ENCODE measurements at regions of chr7 and their contacts with region 1.

Region 1: DNA sequence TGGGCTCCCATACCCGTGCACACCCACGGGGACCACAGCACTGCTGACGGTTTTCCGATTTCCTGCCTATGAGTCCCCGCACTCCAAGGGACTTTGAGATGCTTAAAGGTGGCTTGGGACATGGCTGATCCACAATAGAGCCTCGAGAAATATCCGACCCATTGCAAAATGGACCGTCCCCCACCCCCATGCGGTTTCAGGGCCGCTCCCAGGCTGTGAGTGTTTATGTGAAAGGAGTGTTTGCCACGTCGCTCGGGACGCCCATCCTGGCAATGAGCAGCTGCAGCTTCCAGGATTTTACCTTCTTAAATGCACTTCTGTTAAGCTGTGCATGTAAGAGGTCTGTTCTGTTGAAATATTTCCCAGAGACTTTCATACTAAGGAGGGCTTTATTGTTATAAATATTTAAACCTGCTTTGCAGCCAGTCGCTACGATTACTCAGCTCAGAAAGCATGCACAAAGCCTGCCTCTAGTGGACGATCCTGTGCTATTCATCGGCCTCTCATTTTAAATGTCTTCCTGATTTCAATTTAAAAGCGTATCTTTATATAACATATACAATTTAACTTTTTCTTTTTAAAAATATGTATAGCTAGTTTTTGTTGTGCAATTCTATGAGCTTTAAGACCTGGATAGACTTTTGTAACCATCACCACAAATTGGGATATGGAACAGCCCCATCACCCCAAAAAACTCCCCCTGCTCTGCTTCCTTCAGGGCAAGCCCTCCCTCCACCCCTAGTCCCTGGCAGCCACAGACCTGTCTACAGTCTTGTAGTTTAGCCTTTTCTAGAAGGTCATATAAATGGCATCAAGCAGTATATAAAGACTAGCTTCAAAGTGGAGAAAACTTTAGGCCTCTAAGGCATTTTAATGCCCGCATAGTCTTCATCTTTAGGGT is 418.3 kb downstream of the PAXIP1 start:
- DNase-seq: peak; percentile 56
- H3K4me3 ChIP-seq: no peak overlapping the region
- H3K27ac ChIP-seq: no peak overlapping the region
- H3K4me1 ChIP-seq: peaks cover 0 to 5% of the 10 kb centered on the region in 2 experiments; a peak in 1 of 4 replicates
- H3K27me3 ChIP-seq: no peaks in the 10 kb centered on the region
- CTCF ChIP-seq: peak; percentile 16
- EP300 ChIP-seq: no peak
- RAD21 ChIP-seq: peak; percentile 55

Region 2: GRCh38 chr7:154474903-154475520 is 109.6 kb before region 1 on chr7:
- CTCF ChIA-PET with region 1: no interaction called
- POLR2A ChIA-PET with region 1: no interaction called
- DNase-seq: no peak
- H3K4me3 ChIP-seq: no peak overlapping the region
- H3K27ac ChIP-seq: no peak overlapping the region
- H3K4me1 ChIP-seq: no peaks in the 10 kb centered on the region
- H3K27me3 ChIP-seq: no peaks in the 10 kb centered on the region
- CTCF ChIP-seq: no peak
- EP300 ChIP-seq: no peak
- RAD21 ChIP-seq: no peak

Region 3: DNA sequence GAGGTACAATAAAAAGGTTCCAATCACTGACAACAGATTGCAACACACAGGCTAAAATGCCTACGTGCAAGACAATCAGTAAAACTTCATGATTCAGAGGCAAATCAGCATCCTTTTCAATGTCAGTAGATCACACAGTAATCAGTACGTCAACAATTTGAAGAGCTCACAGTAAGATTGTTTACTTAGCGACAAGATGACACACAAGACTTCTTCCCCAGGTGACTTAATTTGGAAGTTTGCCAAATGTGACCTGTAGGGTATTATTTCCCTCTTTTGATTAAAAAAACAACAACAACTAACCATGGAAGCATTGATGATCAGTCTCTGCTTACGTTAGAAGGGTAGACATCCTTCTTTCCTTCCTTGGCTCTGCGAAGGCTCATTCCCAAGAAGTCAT is 35.3 kb before region 1 on chr7:
- CTCF ChIA-PET with region 1: interaction called, 17 read pairs
- POLR2A ChIA-PET with region 1: no interaction called
- DNase-seq: no peak
- H3K4me3 ChIP-seq: no peak overlapping the region
- H3K27ac ChIP-seq: no peak overlapping the region
- H3K4me1 ChIP-seq: peaks cover 0 to 22% of the 10 kb centered on the region in 2 experiments; a peak in 2 of 4 replicates
- H3K27me3 ChIP-seq: no peaks in the 10 kb centered on the region
- CTCF ChIP-seq: no peak
- EP300 ChIP-seq: no peak
- RAD21 ChIP-seq: no peak

Region 4: DNA sequence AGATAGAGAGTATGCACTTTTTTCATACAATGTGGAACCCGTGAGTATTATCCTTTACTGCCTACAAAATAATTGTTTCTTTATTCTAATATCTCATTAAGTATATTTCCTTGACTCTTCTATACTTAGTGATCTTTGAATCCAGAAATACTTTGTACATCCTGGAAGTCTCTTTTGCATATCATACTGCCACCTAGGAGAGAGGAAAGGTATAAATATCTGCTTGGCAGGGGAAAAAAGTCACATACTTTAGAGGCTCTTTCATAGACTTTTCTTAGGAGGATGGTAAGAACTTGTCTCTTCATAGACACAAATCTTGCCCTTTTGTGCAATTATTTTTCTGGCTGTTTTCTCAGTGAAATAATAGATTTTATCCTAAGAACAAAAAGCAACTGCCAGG is 17.7 kb before region 1 on chr7:
- CTCF ChIA-PET with region 1: interaction called, 27 read pairs
- POLR2A ChIA-PET with region 1: no interaction called
- DNase-seq: no peak
- H3K4me3 ChIP-seq: no peak overlapping the region
- H3K27ac ChIP-seq: no peak overlapping the region
- H3K4me1 ChIP-seq: 0 out of 4 replicates have a peak, but pooled peaks cover 0 to 3% of the 10 kb centered on the region in 2 experiments
- H3K27me3 ChIP-seq: no peaks in the 10 kb centered on the region
- CTCF ChIP-seq: no peak
- EP300 ChIP-seq: no peak
- RAD21 ChIP-seq: peak; percentile 69

Region 5: DNA sequence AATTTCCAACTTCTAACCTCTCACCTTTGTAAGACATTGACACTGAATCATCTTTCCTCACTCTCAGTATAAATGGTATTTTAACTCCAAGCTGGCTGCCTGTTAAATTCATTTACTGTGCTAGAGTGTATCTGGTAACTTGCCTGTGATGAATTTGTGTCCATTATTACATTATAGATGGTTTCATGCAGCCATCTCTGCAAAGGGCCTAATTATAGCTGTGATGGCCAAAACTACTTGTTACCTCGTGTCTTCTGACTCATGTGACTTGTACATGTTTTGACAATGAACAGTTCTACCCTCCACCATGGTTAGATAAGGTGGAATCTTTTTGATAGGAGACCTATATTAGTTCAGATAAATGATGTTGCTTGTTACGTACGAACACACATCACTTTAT is 26.3 kb after region 1 on chr7:
- CTCF ChIA-PET with region 1: interaction called, 15 read pairs
- POLR2A ChIA-PET with region 1: no interaction called
- DNase-seq: peak; percentile 51
- H3K4me3 ChIP-seq: no peak overlapping the region
- H3K27ac ChIP-seq: no peak overlapping the region; a peak in 1 of 4 replicates
- H3K4me1 ChIP-seq: no peaks in the 10 kb centered on the region; a peak in 1 of 4 replicates
- H3K27me3 ChIP-seq: no peaks in the 10 kb centered on the region
- CTCF ChIP-seq: no peak
- EP300 ChIP-seq: peak in 1 of 2 experiments; percentile 61; a peak in 1 of 4 replicates
- RAD21 ChIP-seq: no peak; the same call in 1 of the 2 replicates

Measured in SK-N-SH (cell line).